Motor neuron (in vitro differentiated cells): ENCODE measurements at regions of chr5 and their contacts with region 1.

Region 1: GRCh38 chr5:59810041-59810440 is 83.5 kb downstream of the PDE4D start:
- ATAC-seq: peak; percentile 65 to 84 (median 74)
- H3K4me3 ChIP-seq: peak overlapping the region in 4 of 5 donors; percentile 3 to 19 (median 10)
- H3K27ac ChIP-seq: no peak overlapping the region
- H3K4me1 ChIP-seq: no peaks in the 10 kb centered on the region

Region 2: GRCh38 chr5:59622848-59623247 is 187.2 kb before region 1 on chr5:
- in situ Hi-C with region 1: no loop called
- ATAC-seq: no peak
- H3K4me3 ChIP-seq: no peak overlapping the region
- H3K27ac ChIP-seq: no peak overlapping the region
- H3K4me1 ChIP-seq: no peaks in the 10 kb centered on the region

Region 3: DNA sequence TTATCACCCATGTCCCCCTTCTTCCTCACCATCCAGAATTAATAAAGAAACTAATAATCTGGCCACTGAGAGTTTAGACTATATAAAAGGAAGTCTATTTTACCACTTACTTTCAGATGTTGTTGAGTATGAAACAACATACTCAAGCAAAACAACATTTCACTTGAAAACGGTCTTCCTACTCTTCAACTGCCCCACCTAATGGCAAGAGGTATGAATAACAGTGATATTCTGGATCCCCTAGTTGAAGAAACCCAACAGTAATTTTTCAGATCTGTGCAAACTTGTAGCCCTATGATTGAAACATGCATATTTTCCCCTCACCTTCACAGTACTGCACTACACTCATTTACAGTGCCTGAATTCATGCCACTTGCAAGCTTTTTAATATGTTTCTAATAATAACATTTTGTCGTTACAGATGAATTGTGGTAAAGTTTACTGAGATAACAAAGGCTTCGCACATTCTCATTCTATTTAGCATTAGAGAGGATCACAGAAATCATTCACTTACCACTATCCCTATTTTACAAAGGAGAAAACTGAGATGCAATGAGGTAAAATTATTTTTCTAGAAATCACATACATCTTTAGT is 351.4 kb after region 1 on chr5:
- in situ Hi-C with region 1: loop called in 1 of 9 experiments (anchors 25 kb)
- ATAC-seq: peak in 2 of 8 experiments; percentile 23 to 28
- H3K4me3 ChIP-seq: no peak overlapping the region
- H3K27ac ChIP-seq: no peak overlapping the region
- H3K4me1 ChIP-seq: no peaks in the 10 kb centered on the region

Region 4: GRCh38 chr5:60287174-60287771 is 477.2 kb after region 1 on chr5:
- in situ Hi-C with region 1: loop called in 2 of 9 experiments (anchors 10 to 25 kb)
- ATAC-seq: peak in 5 of 8 experiments; percentile 46 to 80 (median 75)
- H3K4me3 ChIP-seq: no peak overlapping the region
- H3K27ac ChIP-seq: no peak overlapping the region
- H3K4me1 ChIP-seq: no peaks in the 10 kb centered on the region

Region 5: GRCh38 chr5:60382716-60383115 is 572.7 kb after region 1 on chr5:
- in situ Hi-C with region 1: loop called in 4 of 9 experiments (anchors 25 kb)
- ATAC-seq: peak in 3 of 8 experiments; percentile 30 to 59 (median 57)
- H3K4me3 ChIP-seq: no peak overlapping the region
- H3K27ac ChIP-seq: no peak overlapping the region
- H3K4me1 ChIP-seq: peaks cover 0 to 10% of the 10 kb centered on the region in 2 donors

Region 6: GRCh38 chr5:60651872-60652616 is 842.0 kb after region 1 on chr5:
- in situ Hi-C with region 1: loop called in 7 of 9 experiments (anchors 10 to 25 kb)
- ATAC-seq: peak in 4 of 8 experiments; percentile 10 to 97 (median 90)
- H3K4me3 ChIP-seq: no peak overlapping the region
- H3K27ac ChIP-seq: no peak overlapping the region
- H3K4me1 ChIP-seq: peaks cover 0 to 6% of the 10 kb centered on the region in 2 donors

Region 7: GRCh38 chr5:60668686-60669304 is 858.8 kb after region 1 on chr5:
- in situ Hi-C with region 1: loop called in 7 of 9 experiments (anchors 10 to 25 kb)
- ATAC-seq: no peak
- H3K4me3 ChIP-seq: no peak overlapping the region
- H3K27ac ChIP-seq: no peak overlapping the region
- H3K4me1 ChIP-seq: no peaks in the 10 kb centered on the region